ENCODE measurements at regions of chr2 and their contacts with region 1.

Region 1: GRCh38 chr2:168336864-168337263 is 89.5 kb upstream of the STK39 start:
- DNase-seq: no peak
- ATAC-seq: peak; percentile 71
- H3K4me3 Mint-ChIP-seq: no peak overlapping the region
- H3K27ac Mint-ChIP-seq: peak overlapping the region; percentile 59
- H3K4me1 Mint-ChIP-seq: peaks cover 2% of the 10 kb centered on the region
- H3K27me3 Mint-ChIP-seq: peaks cover 4% of the 10 kb centered on the region
- CTCF ChIP-seq: no peak

Region 2: GRCh38 chr2:166539340-166540162 is 1797.3 kb before region 1 on chr2:
- CTCF ChIA-PET with region 1: no interaction called
- POLR2A ChIA-PET with region 1: no interaction called
- intact Hi-C with region 1: loop called (anchors 2 kb)
- DNase-seq: no peak
- ATAC-seq: peak; percentile 68
- H3K4me3 Mint-ChIP-seq: no peak overlapping the region
- H3K27ac Mint-ChIP-seq: no peak overlapping the region
- H3K4me1 Mint-ChIP-seq: peaks cover 2% of the 10 kb centered on the region
- H3K27me3 Mint-ChIP-seq: peaks cover 5% of the 10 kb centered on the region
- CTCF ChIP-seq: peak; percentile 47

Region 3: DNA sequence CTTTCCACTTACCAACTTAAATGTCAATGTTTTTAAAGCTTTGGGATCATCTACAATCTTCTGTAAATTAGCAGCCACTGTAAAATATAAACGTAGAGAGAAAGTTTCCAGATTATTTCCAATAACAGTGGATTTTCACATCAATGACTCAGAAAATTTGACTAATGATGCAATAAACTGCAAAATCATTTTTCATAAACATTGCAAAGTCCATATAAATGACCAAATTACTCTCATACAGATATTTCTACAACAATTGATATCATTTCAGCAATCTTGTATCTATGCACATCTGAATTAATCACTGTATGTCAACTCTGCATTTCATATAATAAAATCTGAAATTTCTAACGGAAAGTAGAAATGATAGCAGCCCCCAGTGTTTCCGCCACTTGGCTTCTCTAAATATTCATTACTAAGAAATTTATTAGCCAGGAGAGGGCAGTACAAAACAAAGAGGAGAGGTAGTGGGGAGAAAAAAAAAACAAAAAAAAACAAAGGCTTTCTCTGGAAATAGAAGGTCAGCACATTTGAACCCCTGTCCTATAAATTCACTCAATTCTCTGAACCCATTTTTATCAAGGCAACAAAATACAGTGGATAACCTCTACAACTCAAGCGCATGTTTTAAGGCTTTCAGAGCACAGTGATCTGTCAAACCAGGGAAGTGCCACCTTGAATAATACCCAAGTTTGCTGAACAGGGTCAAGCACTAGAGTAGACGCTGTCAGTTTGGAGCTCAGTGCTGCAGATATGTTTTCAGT is 372.0 kb before region 1 on chr2:
- CTCF ChIA-PET with region 1: no interaction called
- POLR2A ChIA-PET with region 1: no interaction called
- intact Hi-C with region 1: loop called (anchors 10 kb)
- DNase-seq: no peak
- ATAC-seq: no peak
- H3K4me3 Mint-ChIP-seq: no peak overlapping the region
- H3K27ac Mint-ChIP-seq: no peak overlapping the region
- H3K4me1 Mint-ChIP-seq: peaks cover 20% of the 10 kb centered on the region
- H3K27me3 Mint-ChIP-seq: no peaks in the 10 kb centered on the region
- CTCF ChIP-seq: no peak

Region 4: GRCh38 chr2:168136392-168136977 is 200.4 kb before region 1 on chr2:
- CTCF ChIA-PET with region 1: interaction called, 8 read pairs
- POLR2A ChIA-PET with region 1: no interaction called
- intact Hi-C with region 1: loop called (anchors 1 kb)
- DNase-seq: no peak
- ATAC-seq: peak; percentile 57
- H3K4me3 Mint-ChIP-seq: no peak overlapping the region
- H3K27ac Mint-ChIP-seq: no peak overlapping the region
- H3K4me1 Mint-ChIP-seq: peaks cover 24% of the 10 kb centered on the region
- H3K27me3 Mint-ChIP-seq: no peaks in the 10 kb centered on the region
- CTCF ChIP-seq: peak; percentile 26

Region 5: GRCh38 chr2:168160897-168161296 is 176.0 kb before region 1 on chr2:
- CTCF ChIA-PET with region 1: interaction called, 32 read pairs
- POLR2A ChIA-PET with region 1: no interaction called
- intact Hi-C with region 1: loop called (anchors 1 kb)
- DNase-seq: no peak
- ATAC-seq: peak; percentile 40
- H3K4me3 Mint-ChIP-seq: no peak overlapping the region
- H3K27ac Mint-ChIP-seq: no peak overlapping the region
- H3K4me1 Mint-ChIP-seq: peaks cover 9% of the 10 kb centered on the region
- H3K27me3 Mint-ChIP-seq: no peaks in the 10 kb centered on the region
- CTCF ChIP-seq: no peak

Region 6: GRCh38 chr2:168346725-168347477 is 10.0 kb after region 1 on chr2:
- CTCF ChIA-PET with region 1: interaction called, 16 read pairs
- POLR2A ChIA-PET with region 1: no interaction called
- intact Hi-C with region 1: no loop called
- DNase-seq: peak; percentile 24
- ATAC-seq: peak; percentile 72
- H3K4me3 Mint-ChIP-seq: peak overlapping the region; percentile 78
- H3K27ac Mint-ChIP-seq: no peak overlapping the region
- H3K4me1 Mint-ChIP-seq: peaks cover 22% of the 10 kb centered on the region
- H3K27me3 Mint-ChIP-seq: peaks cover 5% of the 10 kb centered on the region
- CTCF ChIP-seq: peak; percentile 61